Right lobe of liver (tissue), 6 donors: ENCODE measurements at regions of chr17 and their contacts with region 1.

Region 1: GRCh38 chr17:81601525-81602120 is 35.3 kb downstream of the NPLOC4 start:
- DNase-seq: no peak
- ATAC-seq: peak; percentile 87 to 94 (median 91)
- H3K4me3 ChIP-seq: no peak overlapping the region
- H3K27ac ChIP-seq: no peak overlapping the region
- H3K4me1 ChIP-seq: no peaks in the 10 kb centered on the region
- H3K27me3 ChIP-seq: no peaks in the 10 kb centered on the region
- CTCF ChIP-seq: peak; percentile 60 to 92 (median 87)
- POLR2A ChIP-seq: no peak

Region 2: DNA sequence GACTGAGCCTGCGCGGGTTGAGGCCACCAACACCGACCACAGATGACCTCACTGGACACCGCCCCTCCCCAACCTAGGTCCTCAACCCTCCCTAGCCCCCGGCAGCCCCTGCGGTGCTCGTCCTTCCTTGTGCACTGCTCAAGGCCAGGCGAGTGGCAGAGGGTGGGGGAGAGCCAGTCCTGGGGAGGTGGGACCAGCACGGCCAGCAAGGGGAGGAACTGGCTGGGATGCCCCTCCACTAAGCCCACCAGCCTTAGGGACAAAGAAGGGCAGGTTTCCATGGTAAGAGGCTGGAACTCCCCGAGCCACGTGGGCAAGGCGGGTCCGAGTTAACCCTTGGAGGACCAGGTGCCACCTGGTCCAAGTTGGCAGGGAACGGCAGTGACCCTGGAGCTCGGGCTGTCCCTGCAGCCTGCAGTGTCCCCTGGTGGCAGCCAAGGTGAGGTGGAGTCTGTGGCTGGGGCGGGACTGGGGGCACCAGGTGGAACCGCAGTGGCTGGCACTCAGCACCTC is 64.2 kb before region 1 on chr17:
- intact Hi-C with region 1: loop called in 1 of 2 experiments (anchors 10 kb)
- DNase-seq: no peak
- ATAC-seq: peak; percentile 49 to 69 (median 54)
- H3K4me3 ChIP-seq: no peak overlapping the region
- H3K27ac ChIP-seq: no peak overlapping the region
- H3K4me1 ChIP-seq: no peaks in the 10 kb centered on the region
- H3K27me3 ChIP-seq: no peaks in the 10 kb centered on the region
- CTCF ChIP-seq: peak; percentile 46 to 62 (median 56)
- POLR2A ChIP-seq: no peak

Region 3: DNA sequence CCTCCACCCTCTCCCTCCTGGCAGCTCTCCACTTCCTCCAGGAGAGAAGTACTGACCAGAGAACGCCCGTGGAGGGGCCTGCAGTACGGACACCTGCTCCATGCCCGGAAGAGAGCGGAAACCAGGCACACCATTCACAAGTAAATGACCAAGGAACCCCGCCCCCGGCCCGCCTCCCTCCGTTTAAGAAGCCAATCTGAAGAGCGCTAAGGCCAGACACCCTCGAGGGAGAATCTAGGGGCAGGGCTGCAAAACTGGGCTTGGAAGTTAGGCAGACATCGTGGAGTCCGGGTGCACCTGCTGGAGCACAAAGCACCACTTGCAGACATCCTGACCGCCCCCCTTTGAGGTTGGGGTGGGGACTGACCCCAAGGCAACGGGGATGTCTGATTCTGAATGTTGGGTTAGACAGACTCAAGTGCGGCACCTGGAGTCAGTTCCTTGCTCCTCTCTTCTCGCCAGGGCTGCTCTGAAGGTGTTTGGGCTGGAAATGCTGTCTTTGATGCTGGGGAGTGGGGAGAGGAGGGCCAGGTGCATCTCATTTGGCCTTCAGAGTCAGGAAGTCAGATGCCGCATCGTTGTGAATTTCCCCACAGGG is 48.5 kb before region 1 on chr17:
- intact Hi-C with region 1: loop called in 1 of 2 experiments (anchors 5 kb)
- DNase-seq: peak in 2 of 3 donors; percentile 55 to 63
- ATAC-seq: peak; percentile 7 to 31 (median 15)
- H3K4me3 ChIP-seq: peak overlapping the region; percentile 81 to 94 (median 87)
- H3K27ac ChIP-seq: peak overlapping the region; percentile 60 to 80 (median 68)
- H3K4me1 ChIP-seq: peaks cover 0 to 27% (median 7%) of the 10 kb centered on the region in 4 donors
- H3K27me3 ChIP-seq: no peaks in the 10 kb centered on the region
- CTCF ChIP-seq: no peak
- POLR2A ChIP-seq: no peak